Activated CD8-positive, alpha-beta memory T cell treated with anti-CD3 and anti-CD28 coated beads, Interleukin-2, amount 10 ng/mL, durations not matched to agents 7 days and 5 days (primary cell): ENCODE measurements at regions of chr1 and their contacts with region 1.

Region 1: DNA sequence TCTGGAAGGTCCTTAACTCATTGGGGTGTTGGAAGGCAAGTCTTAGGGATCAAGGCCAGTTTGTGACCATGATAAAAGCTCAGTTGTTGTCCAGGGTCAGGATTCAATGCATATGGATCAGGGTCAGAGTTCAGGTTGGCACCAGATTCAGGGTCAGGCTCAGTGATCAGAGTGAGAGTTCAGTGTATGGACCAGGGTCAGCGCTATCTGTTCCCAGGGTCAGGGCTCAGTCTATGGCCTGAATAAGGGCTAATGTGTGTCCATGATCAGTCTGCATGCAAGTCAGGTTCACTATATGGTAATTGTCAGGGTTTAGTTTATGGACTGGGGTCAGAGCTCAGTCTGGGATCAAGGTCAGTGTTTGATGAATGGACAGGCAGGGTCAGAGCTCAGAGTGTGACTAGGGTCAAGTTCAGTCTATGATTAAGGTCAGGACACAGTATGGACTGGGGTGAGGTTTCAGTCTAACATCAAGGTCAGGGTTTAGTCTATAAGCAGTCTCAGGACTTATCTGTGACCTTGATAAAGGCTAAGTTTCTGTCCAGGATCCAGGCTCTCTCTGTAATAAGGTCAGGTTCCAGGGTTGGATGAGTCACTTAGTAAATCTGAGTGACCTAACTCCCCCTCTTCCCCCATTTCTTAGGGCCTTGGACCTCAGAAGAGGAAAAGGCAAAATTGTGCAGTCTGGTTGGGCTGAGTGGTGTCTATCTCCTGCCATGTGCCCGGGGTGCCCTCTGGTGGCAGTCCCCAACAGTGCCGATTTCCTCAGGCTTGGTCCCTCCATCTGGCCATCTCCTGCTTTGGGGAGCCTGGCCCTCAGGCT is 23.8 kb downstream of the KNCN start:
- DNase-seq: peak; percentile 85
- ATAC-seq: peak; percentile 76
- H3K4me3 Mint-ChIP-seq: no peak overlapping the region
- H3K27ac Mint-ChIP-seq: no peak overlapping the region
- H3K4me1 Mint-ChIP-seq: peaks cover 42% of the 10 kb centered on the region
- H3K27me3 Mint-ChIP-seq: peaks cover 28% of the 10 kb centered on the region

Region 2: DNA sequence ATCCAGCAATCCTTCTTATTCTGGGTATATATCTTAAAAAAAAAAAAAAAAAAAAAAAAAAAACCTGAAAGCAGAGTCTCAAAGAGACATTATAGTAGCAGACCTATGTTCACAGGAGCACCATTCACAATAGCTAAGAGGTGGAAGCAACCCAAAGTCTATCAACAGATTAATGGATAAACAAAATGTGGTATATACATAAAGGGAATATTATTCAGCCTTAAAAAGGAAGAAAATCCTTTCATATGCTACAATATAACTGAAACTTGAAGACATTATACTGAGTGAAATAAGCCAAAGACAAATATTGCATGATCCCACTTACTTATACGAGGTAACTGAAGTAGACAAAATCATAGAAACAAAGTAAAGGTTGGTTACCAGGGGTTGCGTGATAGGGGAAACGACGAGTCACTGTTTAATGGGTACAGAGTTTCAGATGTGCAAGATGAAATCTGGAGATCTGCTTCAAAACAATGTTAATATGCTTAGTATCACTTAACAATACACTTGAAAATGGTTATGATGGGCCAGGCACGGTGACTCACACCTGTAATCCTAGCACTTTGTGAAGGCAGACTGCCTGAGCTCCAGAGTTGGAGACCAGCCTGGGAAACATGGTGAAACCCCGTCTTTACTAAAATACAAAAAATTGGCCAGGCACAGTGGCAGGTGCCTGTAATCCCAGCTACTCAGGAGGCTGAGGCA is 424.8 kb before region 1 on chr1:
- CTCF ChIA-PET with region 1: no interaction called
- DNase-seq: no peak
- ATAC-seq: no peak
- H3K4me3 Mint-ChIP-seq: no peak overlapping the region
- H3K27ac Mint-ChIP-seq: no peak overlapping the region
- H3K4me1 Mint-ChIP-seq: peaks cover 6% of the 10 kb centered on the region
- H3K27me3 Mint-ChIP-seq: peaks cover 3% of the 10 kb centered on the region

Region 3: GRCh38 chr1:46442317-46443161 is 85.1 kb before region 1 on chr1:
- CTCF ChIA-PET with region 1: interaction called, 124 read pairs
- DNase-seq: peak; percentile 80
- ATAC-seq: peak; percentile 81
- H3K4me3 Mint-ChIP-seq: peak overlapping the region; percentile 72
- H3K27ac Mint-ChIP-seq: peak overlapping the region; percentile 66
- H3K4me1 Mint-ChIP-seq: peaks cover 8% of the 10 kb centered on the region
- H3K27me3 Mint-ChIP-seq: peaks cover 28% of the 10 kb centered on the region

Region 4: DNA sequence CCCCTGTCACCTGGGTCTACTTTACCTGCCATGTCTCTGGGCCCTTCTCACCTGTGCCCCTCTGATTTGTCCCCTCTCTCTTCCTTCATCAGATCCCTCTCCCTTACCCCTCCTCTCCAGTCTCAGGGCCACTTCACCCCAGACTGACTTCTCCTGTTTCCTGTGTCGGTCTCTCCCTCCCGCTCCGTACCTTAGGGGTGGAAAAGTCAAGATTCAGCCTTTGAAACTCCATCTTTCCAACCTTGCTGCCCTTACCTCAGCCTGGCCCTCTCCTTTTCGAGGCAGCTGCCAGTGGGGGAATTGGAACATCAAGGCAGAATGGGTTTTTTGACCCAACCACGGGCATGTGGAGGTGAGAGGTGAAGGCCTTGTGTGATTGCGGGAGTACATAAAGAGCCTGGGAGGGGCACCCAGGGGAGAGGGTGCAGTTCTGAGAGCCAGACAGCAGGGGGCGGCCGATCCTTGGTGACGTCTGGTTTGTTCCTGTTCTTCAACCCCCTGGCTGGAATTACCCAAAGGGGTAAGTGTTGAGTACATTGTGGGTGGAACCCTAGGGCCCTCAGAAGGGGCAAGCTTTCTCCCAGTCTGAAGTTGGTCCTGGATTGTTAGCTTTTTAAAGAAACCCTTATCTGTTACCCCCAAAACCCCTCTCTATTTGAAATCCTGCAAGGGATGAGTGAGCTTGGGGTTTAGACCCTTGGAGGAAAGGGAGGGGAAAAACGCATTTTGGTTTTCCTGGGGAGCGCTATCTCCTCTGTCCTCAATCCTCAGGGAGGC is 50.3 kb before region 1 on chr1:
- CTCF ChIA-PET with region 1: interaction called, 94 read pairs
- DNase-seq: peak; percentile 81
- ATAC-seq: peak; percentile 83
- H3K4me3 Mint-ChIP-seq: no peak overlapping the region
- H3K27ac Mint-ChIP-seq: no peak overlapping the region
- H3K4me1 Mint-ChIP-seq: no peaks in the 10 kb centered on the region
- H3K27me3 Mint-ChIP-seq: peaks cover 41% of the 10 kb centered on the region

Region 5: DNA sequence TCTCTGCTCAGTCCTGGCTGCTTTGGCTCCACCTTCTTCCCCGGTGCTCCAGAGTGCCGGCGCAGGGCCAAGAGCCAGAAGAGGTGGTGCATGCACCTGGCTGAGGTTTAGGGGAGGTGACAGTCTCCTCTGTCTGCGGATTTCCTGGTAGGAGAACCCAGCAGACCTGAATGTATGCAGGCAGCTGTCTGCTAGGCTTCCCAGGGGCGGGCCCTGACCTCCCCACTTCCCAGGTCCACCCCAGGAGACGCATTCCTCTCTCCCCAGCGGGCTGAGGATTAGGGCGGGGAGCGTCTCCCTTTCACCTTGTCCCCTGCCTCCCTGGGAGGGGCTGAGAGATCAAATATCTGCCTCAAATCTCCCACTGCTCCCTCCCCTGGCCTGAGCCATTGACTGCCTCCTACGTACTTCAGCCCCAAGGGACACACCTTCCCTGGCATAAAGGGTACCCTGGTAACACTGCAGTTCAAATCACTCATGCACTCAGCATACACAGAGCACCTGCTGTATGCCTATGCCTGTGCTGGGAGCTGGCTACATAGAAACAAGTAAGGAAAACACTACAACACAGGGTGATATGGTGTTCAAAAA is 10.6 kb before region 1 on chr1:
- CTCF ChIA-PET with region 1: interaction called, 34 read pairs
- DNase-seq: no peak
- ATAC-seq: no peak
- H3K4me3 Mint-ChIP-seq: no peak overlapping the region
- H3K27ac Mint-ChIP-seq: no peak overlapping the region
- H3K4me1 Mint-ChIP-seq: peaks cover 19% of the 10 kb centered on the region
- H3K27me3 Mint-ChIP-seq: peaks cover 43% of the 10 kb centered on the region

Region 6: GRCh38 chr1:46589529-46589928 is 61.8 kb after region 1 on chr1:
- CTCF ChIA-PET with region 1: no interaction called
- DNase-seq: no peak
- ATAC-seq: no peak
- H3K4me3 Mint-ChIP-seq: no peak overlapping the region
- H3K27ac Mint-ChIP-seq: no peak overlapping the region
- H3K4me1 Mint-ChIP-seq: peaks cover 30% of the 10 kb centered on the region
- H3K27me3 Mint-ChIP-seq: no peaks in the 10 kb centered on the region

Region 7: DNA sequence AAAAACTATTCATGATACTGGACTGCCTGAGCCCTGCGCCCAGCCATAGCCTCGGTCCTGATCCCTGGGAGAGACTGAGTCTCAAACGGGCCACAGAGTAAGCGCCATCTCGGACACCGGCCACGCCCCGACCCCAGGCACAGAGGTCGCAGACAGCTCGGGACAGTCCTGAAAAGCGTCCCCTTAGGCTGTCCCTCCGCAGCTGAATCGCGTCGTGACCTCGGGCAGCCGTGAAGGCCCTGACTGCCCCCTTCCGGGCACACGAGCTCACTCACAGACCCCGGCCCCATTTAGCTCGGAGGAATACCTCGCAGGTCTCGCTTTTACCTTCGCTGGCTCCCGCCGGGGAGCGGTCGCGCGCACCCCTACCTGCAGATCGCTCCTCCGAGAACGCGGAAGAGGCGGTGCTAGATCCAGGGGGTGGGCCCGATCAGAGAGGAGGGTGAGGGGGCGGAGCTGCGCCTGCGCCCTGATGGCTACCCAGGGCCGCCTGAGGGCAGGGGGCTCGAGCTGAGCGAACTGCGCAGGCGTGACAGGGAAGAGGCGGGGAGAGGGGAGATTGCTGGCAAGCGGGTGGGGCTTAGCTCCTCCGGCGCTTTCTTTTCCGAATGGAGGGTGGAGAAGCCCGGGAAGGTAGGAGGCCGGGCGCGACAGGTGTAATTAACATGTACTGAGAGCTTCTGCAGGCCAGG is 76.3 kb after region 1 on chr1 and contains the start of gene MKNK1:
- CTCF ChIA-PET with region 1: interaction called, 11 read pairs
- DNase-seq: peak; percentile 98
- ATAC-seq: peak; percentile 98
- H3K4me3 Mint-ChIP-seq: peak within 1 kb of the TSS; percentile 93
- H3K27ac Mint-ChIP-seq: peak within 1 kb of the TSS; percentile 82
- H3K4me1 Mint-ChIP-seq: peaks cover 73% of the 10 kb centered on the region
- H3K27me3 Mint-ChIP-seq: no peaks in the 10 kb centered on the region
- total RNA-seq, gene MKNK1: 70.6 to 78.6 TPM

Region 8: GRCh38 chr1:46724991-46725735 is 197.5 kb after region 1 on chr1:
- CTCF ChIA-PET with region 1: interaction called, 68 read pairs
- DNase-seq: peak; percentile 80
- ATAC-seq: peak; percentile 97
- H3K4me3 Mint-ChIP-seq: no peak overlapping the region
- H3K27ac Mint-ChIP-seq: no peak overlapping the region
- H3K4me1 Mint-ChIP-seq: no peaks in the 10 kb centered on the region
- H3K27me3 Mint-ChIP-seq: peaks cover 35% of the 10 kb centered on the region